Activated CD4-positive, alpha-beta T cell treated with anti-CD3 and anti-CD28 coated beads, Interleukin-2, amount 10 ng/mL, durations not matched to agents 24 days and 14 days (primary cell): ENCODE measurements at regions of chr7 and their contacts with region 1.

Region 1: DNA sequence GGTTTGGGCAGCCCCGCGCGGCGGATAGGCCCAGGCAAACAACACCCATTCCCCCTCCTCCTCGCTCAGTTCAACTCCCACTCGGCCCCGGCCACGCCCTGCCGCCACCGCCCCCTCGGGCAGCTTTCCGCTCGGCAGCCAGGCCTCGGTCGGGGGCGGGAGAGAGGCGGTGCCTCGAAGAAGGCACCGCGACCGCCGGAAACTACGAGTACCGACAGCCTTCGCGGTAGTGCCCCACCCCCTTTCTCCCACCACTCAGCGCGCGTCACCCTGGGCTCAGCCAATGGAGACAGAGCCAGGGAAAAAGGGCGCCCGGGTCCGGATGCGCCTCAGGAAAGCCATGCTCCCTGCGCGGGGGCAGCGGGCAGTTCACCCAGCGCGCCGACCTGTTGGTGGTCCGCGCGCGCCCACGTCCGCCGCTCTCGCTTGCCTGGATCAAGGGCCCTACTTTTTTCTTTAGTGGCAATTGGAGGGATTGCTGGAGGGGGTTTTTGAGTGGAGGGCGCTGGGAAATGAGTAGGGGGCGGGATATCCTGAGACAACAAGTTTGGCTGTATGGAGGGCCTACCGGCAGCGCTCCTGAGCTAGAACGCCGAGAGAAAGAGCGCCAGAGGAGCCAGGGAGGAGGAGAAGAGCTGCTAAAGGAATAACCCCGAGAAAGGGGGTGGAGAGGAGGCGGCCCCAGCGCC is 557 bp upstream of the SP4 start:
- DNase-seq: peak; percentile 100
- H3K4me3 Mint-ChIP-seq: peak overlapping the region; percentile 96
- H3K27ac Mint-ChIP-seq: peak overlapping the region; percentile 100
- H3K4me1 Mint-ChIP-seq: peaks cover 36% of the 10 kb centered on the region
- H3K27me3 Mint-ChIP-seq: no peaks in the 10 kb centered on the region

Region 2: DNA sequence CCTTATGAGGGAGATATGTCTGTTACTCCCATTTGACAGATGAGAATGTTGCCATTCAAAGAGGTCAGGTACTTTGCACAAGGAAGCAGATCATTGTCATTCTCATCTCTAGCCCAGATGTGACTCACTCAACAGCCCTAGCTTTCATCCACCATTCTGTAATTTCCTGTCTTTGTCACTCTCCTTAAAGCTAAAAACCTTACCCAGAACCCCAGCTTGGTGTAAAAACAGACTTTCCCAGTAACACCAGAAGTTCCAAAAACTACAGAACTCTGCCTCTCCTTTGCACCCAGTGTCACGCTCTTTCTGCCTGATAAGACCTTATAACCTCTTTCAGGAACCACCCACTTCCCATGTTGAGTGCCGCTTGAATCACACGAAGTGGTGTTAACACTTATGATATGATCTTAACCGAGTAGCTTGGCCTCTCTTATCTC is 88.6 kb before region 1 on chr7:
- intact Hi-C with region 1: loop called (anchors 1 kb)
- DNase-seq: peak; percentile 87
- H3K4me3 Mint-ChIP-seq: peak overlapping the region; percentile 13
- H3K27ac Mint-ChIP-seq: peak overlapping the region; percentile 87
- H3K4me1 Mint-ChIP-seq: peaks cover 47% of the 10 kb centered on the region
- H3K27me3 Mint-ChIP-seq: no peaks in the 10 kb centered on the region

Region 3: DNA sequence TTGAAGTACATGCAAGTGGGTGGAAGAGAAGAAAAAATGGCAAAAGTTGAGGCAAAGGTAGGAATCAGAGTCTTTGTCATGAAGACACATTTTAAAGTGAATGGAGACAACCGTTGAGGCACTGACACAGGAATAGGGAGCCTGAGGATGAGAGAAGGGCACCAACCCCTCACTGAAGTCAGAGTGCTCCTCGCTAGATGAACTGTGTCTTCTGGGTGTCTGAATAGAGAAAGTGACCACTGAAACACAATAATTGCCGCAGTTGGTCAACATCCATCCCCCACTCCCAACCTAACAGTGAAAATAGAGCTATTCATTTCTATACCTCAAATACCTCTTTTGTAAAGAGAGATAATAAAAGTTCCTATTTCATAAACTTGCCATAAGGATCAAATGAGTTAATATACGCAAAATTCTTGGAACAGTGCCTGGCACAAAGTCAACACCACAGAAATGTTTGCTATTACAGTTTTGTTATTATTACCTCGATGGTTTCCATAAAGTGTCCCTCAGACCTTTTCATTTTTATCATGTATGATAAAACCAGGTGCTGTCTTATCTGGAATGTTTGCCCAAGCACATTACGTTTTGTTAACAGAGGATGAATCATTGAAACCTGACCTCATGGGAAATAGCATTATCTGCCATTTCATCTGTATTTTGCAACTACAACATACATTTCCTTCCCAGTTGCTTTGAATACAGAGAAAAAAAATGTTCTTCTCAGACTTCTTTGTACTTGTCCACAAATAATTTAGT is 61.3 kb before region 1 on chr7:
- intact Hi-C with region 1: loop called (anchors 1 kb)
- DNase-seq: peak; percentile 54
- H3K4me3 Mint-ChIP-seq: peak overlapping the region; percentile 41
- H3K27ac Mint-ChIP-seq: peak overlapping the region; percentile 57
- H3K4me1 Mint-ChIP-seq: peaks cover 56% of the 10 kb centered on the region
- H3K27me3 Mint-ChIP-seq: no peaks in the 10 kb centered on the region

Region 4: DNA sequence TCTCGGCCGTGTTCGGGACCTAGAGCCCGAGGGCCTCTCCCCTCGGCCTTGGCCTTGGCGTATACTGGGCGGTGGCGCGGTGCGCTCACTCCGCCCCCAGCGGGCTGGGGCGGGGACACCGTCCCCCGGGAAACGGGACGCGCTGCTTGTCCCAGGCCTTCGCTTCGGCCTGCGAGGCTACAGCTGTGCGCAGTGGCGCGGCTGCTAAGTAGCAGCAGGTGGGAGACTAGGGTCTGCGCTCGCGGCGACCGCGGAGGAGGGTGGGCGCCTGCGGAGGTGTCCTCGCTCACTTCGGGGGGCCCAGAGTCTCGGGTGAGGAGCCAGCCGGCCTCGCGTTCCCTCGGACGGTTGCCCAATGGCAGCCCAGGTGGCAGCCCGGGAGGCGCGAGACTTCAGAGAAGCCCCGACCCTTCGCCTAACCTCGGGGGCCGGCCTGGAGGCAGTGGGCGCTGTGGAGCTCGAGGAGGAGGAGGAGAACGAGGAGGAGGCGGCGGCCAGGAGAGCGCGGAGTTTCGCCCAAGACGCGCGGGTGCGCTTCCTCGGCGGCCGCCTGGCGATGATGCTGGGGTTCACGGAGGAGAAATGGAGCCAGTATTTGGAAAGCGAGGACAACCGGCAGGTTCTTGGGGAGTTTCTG is 115.7 kb after region 1 on chr7 and contains the start of gene DNAH11:
- intact Hi-C with region 1: loop called (anchors 5 kb)
- DNase-seq: peak; percentile 86
- H3K4me3 Mint-ChIP-seq: peak within 1 kb of the TSS; percentile 81
- H3K27ac Mint-ChIP-seq: peak within 1 kb of the TSS; percentile 39
- H3K4me1 Mint-ChIP-seq: peaks cover 16% of the 10 kb centered on the region
- H3K27me3 Mint-ChIP-seq: peaks cover 43% of the 10 kb centered on the region
- total RNA-seq, gene DNAH11: 3.0 and 6.1 TPM in 2 replicates

Region 5: DNA sequence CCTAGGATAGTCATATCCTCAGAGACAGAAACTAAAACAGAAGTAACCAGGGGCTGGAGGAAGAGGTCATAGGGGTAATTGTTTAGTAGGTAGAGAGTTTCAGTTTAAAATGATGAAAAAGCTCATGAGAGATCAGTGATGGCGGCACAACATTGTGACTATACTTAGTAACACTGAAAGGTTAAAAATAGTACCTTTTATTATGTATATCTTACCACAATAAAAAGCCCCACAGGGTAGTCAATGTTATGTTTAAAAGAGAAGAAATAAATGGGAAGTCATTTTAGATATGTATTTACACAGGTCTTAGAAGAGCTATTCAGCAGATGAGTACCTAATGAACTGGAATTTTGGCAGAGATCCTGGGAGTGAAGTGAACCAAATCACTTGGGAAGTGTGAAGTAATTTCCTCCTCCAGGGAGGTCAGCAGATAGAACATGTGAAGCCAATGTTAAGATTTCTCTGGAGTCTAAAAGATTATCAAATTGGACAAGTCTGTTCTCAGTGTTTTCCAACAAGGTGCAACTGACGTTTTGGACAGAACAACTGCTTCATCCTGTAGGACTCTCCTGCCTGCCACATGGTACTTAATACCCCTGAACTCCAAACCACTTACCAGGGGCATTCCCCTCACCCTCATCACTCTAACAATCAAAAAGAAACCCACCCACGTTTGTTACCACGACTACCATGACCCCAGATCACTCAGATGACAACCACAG is 512.0 kb after region 1 on chr7:
- intact Hi-C with region 1: loop called (anchors 1 kb)
- DNase-seq: peak; percentile 79
- H3K4me3 Mint-ChIP-seq: peak overlapping the region; percentile 72
- H3K27ac Mint-ChIP-seq: peak overlapping the region; percentile 95
- H3K4me1 Mint-ChIP-seq: peaks cover 66% of the 10 kb centered on the region
- H3K27me3 Mint-ChIP-seq: no peaks in the 10 kb centered on the region

Region 6: GRCh38 chr7:23013715-23014649 is 1586.7 kb after region 1 on chr7 and contains the start of gene HYCC1:
- intact Hi-C with region 1: loop called (anchors 5 kb)
- DNase-seq: peak; percentile 100
- H3K4me3 Mint-ChIP-seq: peak within 1 kb of the TSS; percentile 92
- H3K27ac Mint-ChIP-seq: peak within 1 kb of the TSS; percentile 88
- H3K4me1 Mint-ChIP-seq: peaks cover 29% of the 10 kb centered on the region
- H3K27me3 Mint-ChIP-seq: no peaks in the 10 kb centered on the region
- total RNA-seq, gene HYCC1: 33.7 and 41.5 TPM in 2 replicates